Activated CD8-positive, alpha-beta T cell treated with anti-CD3 and anti-CD28 coated beads for 36 hours (primary cell): ENCODE measurements at regions of chr6 and their contacts with region 1.

Region 1: GRCh38 chr6:112163295-112164257 is 76.2 kb downstream of the FAM229B start:
- DNase-seq: peak; percentile 90
- ATAC-seq: peak; percentile 98
- H3K4me3 Mint-ChIP-seq: peak overlapping the region; percentile 42
- H3K27ac Mint-ChIP-seq: no peak overlapping the region
- H3K4me1 Mint-ChIP-seq: peaks cover 12% of the 10 kb centered on the region
- H3K27me3 Mint-ChIP-seq: peaks cover 42% of the 10 kb centered on the region
- CTCF ChIP-seq: peak; percentile 97

Region 2: DNA sequence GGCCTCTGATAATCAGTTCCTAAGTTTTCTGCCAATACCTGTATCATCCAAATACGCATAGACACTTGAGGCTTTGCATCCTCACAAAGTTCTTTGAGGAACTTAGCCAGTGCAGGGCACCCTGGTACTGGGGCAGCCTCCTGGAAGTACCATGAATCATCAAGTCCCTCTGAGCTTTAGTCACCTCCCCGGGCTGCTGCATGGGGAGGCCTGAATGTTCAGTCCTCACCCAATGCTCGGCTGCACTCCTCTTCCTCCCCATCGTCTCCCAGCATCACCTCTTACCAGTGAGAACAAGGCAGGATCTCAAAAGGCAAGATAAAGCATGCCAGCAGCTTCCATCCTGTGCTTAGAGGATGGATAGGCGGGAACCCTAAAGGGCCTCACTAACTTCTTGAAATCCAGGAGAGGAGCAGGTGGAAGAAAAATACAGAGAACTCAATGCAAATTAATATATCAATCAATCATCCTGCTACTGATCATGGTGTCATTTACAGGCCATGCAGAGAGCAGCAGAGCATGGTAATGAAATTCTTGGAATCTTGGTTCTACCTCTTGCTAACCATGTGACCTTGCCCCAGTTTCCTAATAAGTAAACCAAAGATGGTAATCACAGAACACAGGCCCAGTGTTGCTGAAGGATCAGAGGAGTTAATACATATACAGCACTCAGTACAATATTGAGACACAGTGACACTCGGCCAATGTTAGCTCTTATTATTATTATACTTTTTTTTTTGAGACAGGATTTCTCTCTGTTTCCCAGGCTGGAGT is 114.4 kb before region 1 on chr6:
- CTCF ChIA-PET with region 1: interaction called, 10 read pairs
- POLR2A ChIA-PET with region 1: interaction called, 3 read pairs
- intact Hi-C with region 1: no loop called
- DNase-seq: no peak
- ATAC-seq: peak; percentile 64
- H3K4me3 Mint-ChIP-seq: no peak overlapping the region
- H3K27ac Mint-ChIP-seq: no peak overlapping the region
- H3K4me1 Mint-ChIP-seq: peaks cover 8% of the 10 kb centered on the region
- H3K27me3 Mint-ChIP-seq: no peaks in the 10 kb centered on the region
- CTCF ChIP-seq: no peak

Region 3: GRCh38 chr6:112081569-112081968 is 82.0 kb before region 1 on chr6:
- CTCF ChIA-PET with region 1: interaction called, 161 read pairs
- POLR2A ChIA-PET with region 1: interaction called, 8 read pairs
- intact Hi-C with region 1: loop called (anchors 1 kb)
- DNase-seq: no peak
- ATAC-seq: no peak
- H3K4me3 Mint-ChIP-seq: no peak overlapping the region
- H3K27ac Mint-ChIP-seq: no peak overlapping the region
- H3K4me1 Mint-ChIP-seq: peaks cover 10% of the 10 kb centered on the region
- H3K27me3 Mint-ChIP-seq: no peaks in the 10 kb centered on the region
- CTCF ChIP-seq: no peak

Region 4: GRCh38 chr6:112096901-112097300 is 66.7 kb before region 1 on chr6:
- CTCF ChIA-PET with region 1: interaction called, 21 read pairs
- POLR2A ChIA-PET with region 1: no interaction called
- intact Hi-C with region 1: no loop called
- DNase-seq: no peak
- ATAC-seq: no peak
- H3K4me3 Mint-ChIP-seq: no peak overlapping the region
- H3K27ac Mint-ChIP-seq: no peak overlapping the region
- H3K4me1 Mint-ChIP-seq: no peaks in the 10 kb centered on the region
- H3K27me3 Mint-ChIP-seq: no peaks in the 10 kb centered on the region
- CTCF ChIP-seq: no peak

Region 5: GRCh38 chr6:112144145-112144926 is 19.2 kb before region 1 on chr6:
- CTCF ChIA-PET with region 1: interaction called, 19 read pairs
- POLR2A ChIA-PET with region 1: interaction called, 3 read pairs
- intact Hi-C with region 1: no loop called
- DNase-seq: no peak
- ATAC-seq: no peak
- H3K4me3 Mint-ChIP-seq: no peak overlapping the region
- H3K27ac Mint-ChIP-seq: no peak overlapping the region
- H3K4me1 Mint-ChIP-seq: peaks cover 1% of the 10 kb centered on the region
- H3K27me3 Mint-ChIP-seq: peaks cover 6% of the 10 kb centered on the region
- CTCF ChIP-seq: no peak